Activated CD8-positive, alpha-beta T cell treated with anti-CD3 and anti-CD28 coated beads for 36 hours (primary cell): ENCODE measurements at regions of chr1 and their contacts with region 1.

Region 1: DNA sequence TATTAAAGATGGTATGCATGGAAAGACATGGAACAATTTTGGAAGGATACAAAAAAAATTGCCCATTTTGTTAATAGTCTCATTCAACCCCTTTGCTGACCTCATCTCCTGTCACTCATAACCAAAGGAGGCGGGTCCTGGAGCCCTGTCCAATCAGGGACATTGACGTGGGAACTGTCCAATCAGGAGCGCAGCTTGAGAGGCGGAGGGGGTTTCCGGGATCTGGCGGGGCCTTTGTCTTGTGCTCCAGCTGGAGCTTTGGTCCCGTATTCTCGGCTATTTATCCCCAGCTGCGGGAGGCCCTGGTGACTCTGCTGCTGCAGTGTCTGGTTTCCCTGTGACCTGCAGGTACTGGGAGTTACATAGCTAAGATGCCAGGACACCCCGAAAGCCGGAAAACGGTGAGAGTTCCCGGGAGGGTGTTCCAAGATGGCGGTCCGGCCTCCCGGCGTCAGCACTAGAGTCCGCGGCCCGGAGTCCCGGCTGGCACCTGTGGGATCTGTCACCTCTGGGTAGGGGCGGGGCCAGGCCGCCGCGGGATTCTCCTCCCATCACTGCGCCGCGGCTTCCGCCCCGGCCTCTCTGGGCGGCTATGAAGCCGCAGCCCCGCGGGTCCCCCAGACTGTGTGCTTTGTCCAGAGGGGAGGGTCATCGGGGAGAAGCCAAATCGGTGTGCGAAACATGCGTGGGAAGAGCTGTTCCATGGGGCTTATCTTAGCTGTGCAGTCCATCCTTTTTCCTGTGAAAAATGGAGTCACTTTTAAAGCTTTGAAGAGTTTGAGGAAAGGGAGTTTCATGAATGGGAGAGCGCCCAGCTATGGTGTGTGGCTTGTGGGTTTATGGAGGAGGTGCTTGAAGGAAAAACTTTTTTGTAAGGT is at the start of gene ZNF678:
- DNase-seq: peak; percentile 96
- ATAC-seq: peak; percentile 95
- H3K4me3 Mint-ChIP-seq: peak within 1 kb of the TSS; percentile 85
- H3K27ac Mint-ChIP-seq: peak within 1 kb of the TSS; percentile 94
- H3K4me1 Mint-ChIP-seq: peaks cover 26% of the 10 kb centered on the region
- H3K27me3 Mint-ChIP-seq: peaks cover 23% of the 10 kb centered on the region
- CTCF ChIP-seq: no peak
- total RNA-seq, gene ZNF678: 6.7 to 7.4 TPM

Region 2: GRCh38 chr1:227472772-227473171 is 90.8 kb before region 1 on chr1:
- CTCF ChIA-PET with region 1: no interaction called
- POLR2A ChIA-PET with region 1: no interaction called
- intact Hi-C with region 1: no loop called
- DNase-seq: no peak
- ATAC-seq: no peak
- H3K4me3 Mint-ChIP-seq: no peak overlapping the region
- H3K27ac Mint-ChIP-seq: no peak overlapping the region
- H3K4me1 Mint-ChIP-seq: no peaks in the 10 kb centered on the region
- H3K27me3 Mint-ChIP-seq: peaks cover 23% of the 10 kb centered on the region
- CTCF ChIP-seq: no peak

Region 3: GRCh38 chr1:227542143-227543120 is 21.1 kb before region 1 on chr1:
- CTCF ChIA-PET with region 1: interaction called, 14 read pairs
- POLR2A ChIA-PET with region 1: interaction called, 7 read pairs
- intact Hi-C with region 1: no loop called
- DNase-seq: peak; percentile 91
- ATAC-seq: peak; percentile 98
- H3K4me3 Mint-ChIP-seq: peak overlapping the region; percentile 50
- H3K27ac Mint-ChIP-seq: peak overlapping the region; percentile 72
- H3K4me1 Mint-ChIP-seq: peaks cover 7% of the 10 kb centered on the region
- H3K27me3 Mint-ChIP-seq: no peaks in the 10 kb centered on the region
- CTCF ChIP-seq: peak; percentile 94

Region 4: DNA sequence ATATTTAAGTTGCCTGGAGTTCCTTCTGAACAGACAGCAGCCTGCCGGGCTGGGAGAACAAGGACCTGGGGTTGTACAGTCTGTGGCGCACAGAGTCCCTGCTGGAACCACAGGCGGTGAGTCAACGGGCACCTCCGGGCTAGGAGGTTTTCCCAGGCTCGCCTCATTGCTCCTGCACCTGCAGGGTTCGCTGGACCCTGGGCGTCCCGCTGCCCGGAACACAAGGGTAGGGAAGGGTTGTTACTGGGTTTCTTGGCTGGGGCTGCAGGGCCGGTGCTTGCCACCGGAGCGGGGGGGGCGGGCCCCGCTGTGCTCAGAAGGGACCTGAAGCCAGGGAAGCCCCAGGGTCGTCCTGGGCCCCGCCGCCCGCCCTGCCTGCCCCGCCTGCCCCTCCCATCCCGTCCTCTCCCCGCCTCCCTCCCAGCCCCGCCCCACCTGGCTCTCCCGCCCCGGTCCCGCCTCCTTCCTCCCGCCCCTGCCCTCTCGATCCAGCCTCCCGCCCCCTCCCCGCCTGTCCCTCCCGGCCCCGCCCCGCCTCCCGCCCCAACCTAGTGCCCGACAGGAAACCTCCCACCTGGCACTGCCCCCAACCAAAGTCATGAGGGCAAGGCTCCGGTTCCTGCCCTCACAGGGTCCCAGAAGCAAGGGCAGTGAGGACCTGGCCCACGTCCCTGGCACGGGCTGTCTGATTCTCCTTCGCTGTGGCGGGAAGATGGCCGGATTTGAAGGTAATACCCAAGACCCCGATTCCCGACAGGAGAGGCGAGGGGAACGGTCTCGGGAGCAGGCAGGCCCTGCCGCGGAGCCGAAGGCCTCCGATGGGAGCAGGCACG is 164.7 kb after region 1 on chr1:
- CTCF ChIA-PET with region 1: no interaction called
- POLR2A ChIA-PET with region 1: no interaction called
- intact Hi-C with region 1: loop called (anchors 10 kb)
- DNase-seq: peak; percentile 79
- ATAC-seq: peak; percentile 71
- H3K4me3 Mint-ChIP-seq: peak overlapping the region; percentile 80
- H3K27ac Mint-ChIP-seq: peak overlapping the region; percentile 79
- H3K4me1 Mint-ChIP-seq: peaks cover 20% of the 10 kb centered on the region
- H3K27me3 Mint-ChIP-seq: peaks cover 5% of the 10 kb centered on the region
- CTCF ChIP-seq: no peak